ENCODE measurements at regions of chr16 and their contacts with region 1.

Region 1: GRCh38 chr16:77812856-77813500 is 24.6 kb downstream of the VAT1L start:
- DNase-seq: no peak
- H3K4me3 ChIP-seq: no peak overlapping the region
- H3K27ac ChIP-seq: no peak overlapping the region
- H3K4me1 ChIP-seq: no peaks in the 10 kb centered on the region
- H3K27me3 ChIP-seq: no peaks in the 10 kb centered on the region
- CTCF ChIP-seq: no peak
- POLR2A ChIP-seq: no peak

Region 2: GRCh38 chr16:77736879-77737278 is 76.1 kb before region 1 on chr16:
- intact Hi-C with region 1: no loop called
- DNase-seq: no peak
- H3K4me3 ChIP-seq: no peak overlapping the region
- H3K27ac ChIP-seq: no peak overlapping the region
- H3K4me1 ChIP-seq: no peaks in the 10 kb centered on the region
- H3K27me3 ChIP-seq: no peaks in the 10 kb centered on the region
- CTCF ChIP-seq: no peak
- POLR2A ChIP-seq: no peak

Region 3: DNA sequence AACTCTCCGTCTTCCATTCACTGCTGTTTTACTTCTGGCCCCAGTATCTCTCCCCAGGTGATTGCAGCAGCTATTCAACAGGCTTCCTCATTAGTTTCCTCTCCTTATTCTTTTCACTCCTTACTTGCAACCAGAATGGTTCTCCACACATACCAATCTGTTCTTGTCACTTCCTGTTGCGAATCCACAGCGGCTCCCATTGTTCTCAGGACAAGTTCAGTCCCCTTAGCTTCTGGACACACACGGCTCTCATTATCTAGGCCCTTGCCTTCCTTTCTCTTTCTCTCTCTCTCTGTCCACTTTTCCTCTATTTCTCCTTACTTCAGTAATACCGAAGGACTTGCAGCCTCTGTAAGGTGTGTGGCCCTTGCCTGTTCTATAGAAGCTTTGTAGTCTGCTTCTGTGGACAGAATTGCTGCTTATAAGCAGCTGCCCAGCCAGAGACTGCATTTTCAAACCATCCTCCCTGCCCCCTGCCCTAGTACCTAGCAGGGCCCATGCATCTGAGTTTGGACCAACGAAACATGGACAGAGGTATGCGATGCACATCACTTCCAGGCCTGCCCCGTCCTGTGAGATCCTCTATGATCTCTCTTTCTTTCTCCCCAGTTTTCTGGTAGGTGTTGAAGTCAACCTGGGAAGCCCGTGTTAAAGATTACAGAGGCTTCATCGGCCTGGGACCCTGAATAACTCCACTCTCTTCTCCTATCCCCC is 21.1 kb after region 1 on chr16:
- intact Hi-C with region 1: loop called (anchors 1 kb)
- DNase-seq: peak in 1 of 2 donors; percentile 23
- H3K4me3 ChIP-seq: no peak overlapping the region
- H3K27ac ChIP-seq: peak overlapping the region; percentile 40 to 55
- H3K4me1 ChIP-seq: no peaks in the 10 kb centered on the region
- H3K27me3 ChIP-seq: no peaks in the 10 kb centered on the region
- CTCF ChIP-seq: no peak
- POLR2A ChIP-seq: no peak

Measured in breast epithelium (tissue), 4 donors.